Dorsolateral prefrontal cortex (tissue), 120 donors: ENCODE measurements at regions of chr1 and their contacts with region 1.

Region 1: DNA sequence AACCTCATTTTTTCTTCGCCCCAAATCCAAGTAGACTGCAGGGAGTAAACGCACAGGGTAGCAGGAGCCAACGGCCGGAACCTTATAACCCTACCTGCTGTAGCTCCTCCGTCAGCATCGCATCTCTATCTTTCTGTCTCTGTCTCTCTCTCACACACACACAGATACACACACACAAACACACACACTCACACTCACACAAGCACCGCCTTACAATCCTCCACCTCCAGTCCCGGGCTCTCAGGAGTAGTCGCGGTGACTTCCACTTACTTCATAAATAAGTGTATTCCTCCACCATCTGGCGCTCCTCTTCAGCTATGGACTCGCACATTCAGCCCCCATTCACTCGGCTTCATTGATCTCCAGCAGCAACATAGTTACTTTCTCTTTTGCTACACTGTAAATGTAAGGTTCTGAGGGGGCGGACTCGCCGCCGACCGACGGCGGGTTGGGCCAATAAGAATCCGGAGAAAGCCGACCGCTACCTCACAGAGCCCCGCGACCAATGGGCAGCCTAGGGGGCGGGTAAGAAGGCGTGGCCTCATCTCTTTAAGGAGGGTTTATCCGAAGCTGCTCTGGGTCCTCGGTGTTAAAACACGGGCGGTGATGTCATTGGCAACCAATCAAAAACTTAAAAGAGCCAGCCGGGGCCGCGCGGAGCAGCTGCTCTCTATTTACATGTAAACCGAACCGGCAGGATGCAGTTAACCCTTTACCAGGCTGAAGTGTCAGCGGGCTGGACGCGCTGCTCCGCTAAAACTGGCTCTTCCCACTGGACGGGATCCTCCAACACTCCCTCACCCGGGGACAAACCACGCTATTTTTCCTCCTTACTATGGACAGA is at the start of gene DUSP10:
- DNase-seq: peak; percentile 82 to 100 (median 99)
- H3K4me3 ChIP-seq: peak within 1 kb of the TSS; percentile 47 to 91 (median 78)
- H3K27ac ChIP-seq: peak within 1 kb of the TSS; percentile 86 to 99 (median 97)
- H3K27me3 ChIP-seq: peaks cover 0 to 14% (median 0%) of the 10 kb centered on the region in 45 donors
- CTCF ChIP-seq: peak in 3 of 56 donors; percentile 10 to 37 (median 17)
- total RNA-seq, gene DUSP10: 2.7 to 28.4 (median 9.0) TPM

Region 2: DNA sequence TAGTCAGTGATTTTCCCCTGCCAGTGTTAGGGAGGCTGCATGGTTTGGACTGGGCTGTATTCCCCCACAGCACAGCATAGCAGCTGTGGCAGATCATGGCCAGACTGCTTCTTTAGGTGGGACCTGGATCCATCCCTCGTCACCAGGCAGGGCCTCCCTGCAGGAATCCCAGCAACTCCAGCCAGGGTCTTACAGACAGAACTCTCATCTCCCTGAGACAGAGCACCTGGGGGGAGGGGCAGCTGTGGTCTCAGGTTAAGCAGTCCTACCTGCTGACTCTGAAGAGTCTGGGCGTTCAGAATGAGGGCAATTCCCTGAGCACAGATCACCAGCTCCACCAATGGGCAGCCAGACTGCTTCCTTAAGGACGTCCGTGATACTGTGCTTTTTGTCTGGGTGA is 1099.7 kb before region 1 on chr1:
- intact Hi-C with region 1: no loop called
- DNase-seq: no peak
- H3K4me3 ChIP-seq: no peak overlapping the region
- H3K27ac ChIP-seq: no peak overlapping the region
- H3K27me3 ChIP-seq: no peaks in the 10 kb centered on the region
- CTCF ChIP-seq: no peak

Region 3: DNA sequence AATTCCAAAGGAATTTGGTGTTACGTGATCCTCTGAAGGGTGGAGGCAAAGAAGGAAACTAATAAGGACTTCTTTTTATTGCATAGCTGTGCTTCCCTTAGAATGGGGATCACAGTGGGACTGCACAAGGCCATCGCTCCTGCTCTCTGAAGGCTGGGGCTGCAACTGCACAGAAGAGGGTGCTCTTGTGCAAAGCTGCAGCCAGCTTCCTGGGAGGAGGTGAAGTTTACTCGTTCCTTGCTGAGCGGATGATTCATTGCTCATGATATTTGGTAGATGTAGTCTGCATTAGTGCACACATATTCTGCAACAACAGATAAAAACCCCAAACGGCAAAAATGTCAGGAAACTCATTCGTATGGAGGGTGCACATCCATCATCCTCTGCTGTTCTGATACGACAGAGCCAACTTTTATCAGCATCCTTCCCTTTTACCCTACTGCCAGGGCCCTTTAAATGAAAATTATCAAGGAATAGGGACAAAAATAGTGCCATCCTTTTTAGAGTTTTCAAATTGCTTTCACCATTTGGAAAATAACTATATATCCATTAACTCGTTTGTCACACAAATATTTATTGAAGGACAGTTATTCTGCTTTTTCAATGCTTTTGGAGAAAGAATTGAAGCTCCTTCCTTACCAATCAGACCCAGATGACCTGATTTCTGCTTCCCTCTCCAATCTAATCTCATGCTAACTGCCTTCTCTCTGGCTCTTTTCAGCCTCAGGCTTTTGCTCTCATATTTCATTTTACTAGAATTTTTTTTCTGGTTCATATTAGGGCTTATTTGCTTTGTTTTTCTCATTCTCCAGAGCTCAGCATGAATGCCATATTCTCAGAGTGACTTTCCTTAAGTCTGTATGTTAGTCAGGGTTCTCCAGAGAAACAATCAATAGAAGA is 263.6 kb before region 1 on chr1:
- intact Hi-C with region 1: loop called in 1 of 2 experiments (anchors 5 kb)
- DNase-seq: peak; percentile 21 to 77 (median 64)
- H3K4me3 ChIP-seq: peak overlapping the region in 6 of 59 donors; percentile 4 to 34 (median 20)
- H3K27ac ChIP-seq: peak overlapping the region in 3 of 59 donors; percentile 14 to 30 (median 29)
- H3K27me3 ChIP-seq: peaks cover 0 to 8% (median 0%) of the 10 kb centered on the region in 45 donors
- CTCF ChIP-seq: peak; percentile 19 to 84 (median 66)

Region 4: DNA sequence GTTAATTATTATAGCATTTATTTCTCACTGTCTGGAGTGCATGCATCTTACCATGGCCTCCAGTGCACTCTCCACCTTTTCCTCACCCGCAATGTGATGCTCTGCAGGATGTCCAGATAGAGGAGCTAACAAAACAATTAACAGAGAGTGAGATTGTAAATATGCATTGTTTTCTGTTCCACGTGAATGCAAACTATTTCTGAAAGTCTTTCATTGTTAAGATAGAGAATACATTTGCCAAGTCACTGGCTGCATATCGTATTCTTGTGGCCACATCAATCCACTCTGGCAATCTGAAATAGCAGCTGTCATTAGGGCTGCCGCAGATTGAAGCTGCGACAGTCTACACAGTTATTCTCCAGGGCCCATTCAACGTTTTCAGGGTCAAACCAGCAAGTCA is 143.8 kb before region 1 on chr1:
- intact Hi-C with region 1: loop called (anchors 2 kb)
- DNase-seq: peak in 2 of 10 donors; percentile 39 to 56
- H3K4me3 ChIP-seq: peak overlapping the region in 4 of 59 donors; percentile 3 to 14 (median 7)
- H3K27ac ChIP-seq: peak overlapping the region in 54 of 59 donors; percentile 10 to 88 (median 68)
- H3K27me3 ChIP-seq: no peaks in the 10 kb centered on the region
- CTCF ChIP-seq: peak in 5 of 56 donors; percentile 13 to 32 (median 17)

Region 5: DNA sequence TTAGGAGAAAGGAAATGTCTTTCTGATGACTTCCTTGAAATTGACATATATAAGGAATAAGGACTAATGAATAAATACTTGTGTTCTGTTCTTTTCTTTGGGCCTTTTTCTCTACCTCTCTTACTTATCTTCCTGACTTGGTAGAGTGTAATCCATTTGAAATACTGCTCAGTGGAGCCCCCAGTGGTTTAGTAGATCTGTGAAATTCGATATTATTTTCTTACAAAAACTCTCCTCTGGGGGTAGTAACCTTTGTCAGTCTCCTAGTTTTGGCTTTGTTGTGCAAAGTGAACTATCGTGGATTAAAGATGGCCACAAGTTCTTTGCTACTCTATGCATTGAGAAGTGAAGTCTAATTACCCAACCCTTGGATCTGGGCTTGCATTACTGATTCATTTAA is 48.8 kb before region 1 on chr1:
- intact Hi-C with region 1: no loop called
- DNase-seq: no peak
- H3K4me3 ChIP-seq: no peak overlapping the region
- H3K27ac ChIP-seq: no peak overlapping the region
- H3K27me3 ChIP-seq: no peaks in the 10 kb centered on the region
- CTCF ChIP-seq: peak in 1 of 56 donors; percentile 23

Region 6: GRCh38 chr1:221708987-221709386 is 32.9 kb before region 1 on chr1:
- intact Hi-C with region 1: loop called (anchors 1 to 2 kb)
- DNase-seq: peak in 9 of 10 donors; percentile 25 to 79 (median 57)
- H3K4me3 ChIP-seq: peak overlapping the region in 19 of 59 donors; percentile 6 to 45 (median 19)
- H3K27ac ChIP-seq: peak overlapping the region; percentile 56 to 96 (median 90)
- H3K27me3 ChIP-seq: peaks cover 0 to 3% (median 0%) of the 10 kb centered on the region in 45 donors
- CTCF ChIP-seq: no peak

Region 7: DNA sequence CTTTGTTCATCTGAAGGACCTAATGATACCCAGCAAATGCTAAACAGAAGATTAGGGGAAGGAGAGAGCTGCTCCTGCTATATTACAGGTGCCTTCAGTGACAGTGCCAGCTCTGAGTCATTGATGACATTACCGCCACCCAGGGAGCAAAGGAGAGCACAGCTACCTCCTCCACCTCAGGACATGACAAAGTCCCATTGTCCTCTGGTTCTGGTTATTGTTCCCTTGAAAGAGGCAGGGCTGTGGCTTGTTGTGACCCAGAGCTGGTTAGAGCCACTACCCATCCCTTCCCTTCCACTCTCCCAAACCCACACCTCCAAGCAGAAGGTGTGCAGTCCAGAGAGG is 363.4 kb after region 1 on chr1:
- intact Hi-C with region 1: loop called in 1 of 2 experiments (anchors 10 kb)
- DNase-seq: no peak
- H3K4me3 ChIP-seq: no peak overlapping the region
- H3K27ac ChIP-seq: no peak overlapping the region
- H3K27me3 ChIP-seq: peaks cover 0 to 8% (median 0%) of the 10 kb centered on the region in 45 donors
- CTCF ChIP-seq: no peak

Region 8: DNA sequence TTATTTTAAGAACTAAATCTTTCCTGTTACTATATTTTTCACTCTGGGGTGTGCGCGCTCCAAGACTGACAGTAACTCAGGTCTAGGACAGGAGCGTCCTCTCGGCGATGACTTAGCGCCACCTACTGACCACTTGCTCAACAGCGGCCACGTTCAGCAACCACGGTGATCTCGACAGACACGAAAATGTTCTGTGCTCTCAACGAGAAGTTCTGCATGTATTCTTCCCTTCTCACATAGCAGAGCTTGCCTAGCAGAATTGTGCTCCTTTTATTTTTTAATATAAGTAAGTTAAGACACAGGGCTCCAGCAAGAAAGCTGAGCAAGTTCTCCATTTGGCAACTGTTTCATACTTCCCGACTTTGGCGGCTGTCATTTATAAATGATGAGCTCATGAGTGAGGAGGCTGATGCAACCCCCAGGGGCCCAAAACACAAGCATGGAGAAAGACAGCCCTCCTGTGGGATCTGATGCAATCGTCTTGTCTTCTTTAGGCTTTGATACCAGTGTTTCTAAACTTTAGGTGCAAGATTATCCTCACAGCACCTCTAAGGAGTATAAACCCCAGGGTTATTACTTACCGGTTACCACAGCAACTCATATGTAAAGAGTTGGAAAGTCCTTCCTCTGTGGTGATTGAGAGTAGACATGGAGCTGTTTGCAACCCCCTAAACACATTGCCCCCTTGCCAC is 713.4 kb after region 1 on chr1:
- intact Hi-C with region 1: loop called (anchors 10 kb)
- DNase-seq: peak; percentile 80 to 94 (median 88)
- H3K4me3 ChIP-seq: peak overlapping the region in 39 of 59 donors; percentile 2 to 54 (median 26)
- H3K27ac ChIP-seq: peak overlapping the region in 8 of 59 donors; percentile 6 to 45 (median 25)
- H3K27me3 ChIP-seq: peaks cover 0 to 4% (median 0%) of the 10 kb centered on the region in 45 donors
- CTCF ChIP-seq: peak; percentile 74 to 99 (median 95)